Uterus (tissue), 4 donors: ENCODE measurements at regions of chr19 and their contacts with region 1.

Region 1: GRCh38 chr19:57099199-57099661 is 20.6 kb upstream of the USP29 start:
- DNase-seq: peak; percentile 61 to 76
- H3K4me3 ChIP-seq: no peak overlapping the region
- H3K27ac ChIP-seq: no peak overlapping the region
- H3K4me1 ChIP-seq: no peaks in the 10 kb centered on the region
- H3K27me3 ChIP-seq: no peaks in the 10 kb centered on the region
- CTCF ChIP-seq: peak; percentile 87 to 94 (median 92)
- POLR2A ChIP-seq: no peak

Region 2: DNA sequence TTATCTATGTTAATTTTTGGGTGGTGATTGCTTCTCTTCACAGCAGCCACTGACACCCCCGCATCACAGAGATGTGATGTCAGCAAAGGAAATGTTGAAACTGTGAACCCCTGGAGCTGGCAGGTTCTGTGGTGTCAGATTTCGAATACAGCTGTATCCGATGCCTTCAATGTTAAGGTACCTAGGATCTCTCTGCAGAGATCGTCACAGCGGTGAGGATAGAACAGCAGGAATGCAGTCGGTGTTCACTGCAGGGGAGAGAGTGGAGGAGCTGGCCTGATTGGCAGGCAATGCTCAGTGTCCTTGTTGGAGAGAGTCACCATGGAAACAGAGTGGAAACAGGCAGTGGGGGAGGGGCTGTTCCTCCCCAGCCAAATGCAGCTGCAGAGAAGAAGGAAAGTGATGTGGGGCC is 348.1 kb before region 1 on chr19:
- intact Hi-C with region 1: loop called (anchors 5 kb)
- DNase-seq: peak in 1 of 2 donors; percentile 18
- H3K4me3 ChIP-seq: no peak overlapping the region
- H3K27ac ChIP-seq: no peak overlapping the region
- H3K4me1 ChIP-seq: no peaks in the 10 kb centered on the region
- H3K27me3 ChIP-seq: no peaks in the 10 kb centered on the region
- CTCF ChIP-seq: no peak
- POLR2A ChIP-seq: no peak

Region 3: GRCh38 chr19:56995303-56995702 is 103.9 kb before region 1 on chr19:
- intact Hi-C with region 1: no loop called
- DNase-seq: no peak
- H3K4me3 ChIP-seq: no peak overlapping the region
- H3K27ac ChIP-seq: no peak overlapping the region
- H3K4me1 ChIP-seq: no peaks in the 10 kb centered on the region
- H3K27me3 ChIP-seq: no peaks in the 10 kb centered on the region
- CTCF ChIP-seq: no peak
- POLR2A ChIP-seq: no peak

Region 4: GRCh38 chr19:57141699-57142098 is 42.5 kb after region 1 on chr19:
- intact Hi-C with region 1: no loop called
- DNase-seq: no peak
- H3K4me3 ChIP-seq: no peak overlapping the region
- H3K27ac ChIP-seq: no peak overlapping the region
- H3K4me1 ChIP-seq: no peaks in the 10 kb centered on the region
- H3K27me3 ChIP-seq: no peaks in the 10 kb centered on the region
- CTCF ChIP-seq: no peak
- POLR2A ChIP-seq: no peak